Head of caudate nucleus (tissue), 42 donors: ENCODE measurements at regions of chr17 and their contacts with region 1.

Region 1: DNA sequence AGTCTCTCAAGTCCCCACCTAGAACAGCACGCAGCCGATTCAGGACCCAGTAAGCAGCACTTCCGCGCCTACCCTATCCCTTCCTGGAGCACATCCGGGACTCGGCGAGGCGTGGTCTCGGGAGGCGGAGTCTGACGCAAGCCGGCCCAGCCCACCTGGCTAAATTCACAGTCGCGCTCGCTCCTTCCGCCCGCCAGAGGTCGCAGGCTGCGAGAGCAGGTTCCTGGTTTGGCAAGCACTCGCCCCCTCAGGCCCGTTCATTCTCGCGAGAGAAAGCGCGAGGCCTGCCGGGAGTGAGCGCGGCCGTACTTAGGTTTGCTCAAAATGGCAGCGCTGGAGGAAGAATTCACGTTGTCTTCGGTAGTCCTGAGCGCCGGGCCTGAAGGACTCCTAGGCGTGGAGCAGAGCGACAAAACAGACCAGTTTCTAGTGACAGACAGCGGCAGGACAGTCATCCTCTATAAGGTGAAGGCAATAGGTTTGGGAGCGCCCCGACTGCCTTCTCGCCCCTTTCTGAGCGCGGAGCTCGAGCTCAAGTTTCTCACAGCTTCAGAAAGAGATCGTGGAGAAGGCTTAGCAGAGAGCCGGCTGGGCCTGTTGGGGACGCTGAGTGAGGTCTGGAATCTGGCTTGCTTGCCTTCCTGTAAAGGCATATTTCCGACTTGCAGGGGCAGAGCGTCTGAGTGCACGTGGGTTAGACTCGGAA is at the start of gene NOL11:
- DNase-seq: peak; percentile 99 to 100 (median 100)

Region 2: DNA sequence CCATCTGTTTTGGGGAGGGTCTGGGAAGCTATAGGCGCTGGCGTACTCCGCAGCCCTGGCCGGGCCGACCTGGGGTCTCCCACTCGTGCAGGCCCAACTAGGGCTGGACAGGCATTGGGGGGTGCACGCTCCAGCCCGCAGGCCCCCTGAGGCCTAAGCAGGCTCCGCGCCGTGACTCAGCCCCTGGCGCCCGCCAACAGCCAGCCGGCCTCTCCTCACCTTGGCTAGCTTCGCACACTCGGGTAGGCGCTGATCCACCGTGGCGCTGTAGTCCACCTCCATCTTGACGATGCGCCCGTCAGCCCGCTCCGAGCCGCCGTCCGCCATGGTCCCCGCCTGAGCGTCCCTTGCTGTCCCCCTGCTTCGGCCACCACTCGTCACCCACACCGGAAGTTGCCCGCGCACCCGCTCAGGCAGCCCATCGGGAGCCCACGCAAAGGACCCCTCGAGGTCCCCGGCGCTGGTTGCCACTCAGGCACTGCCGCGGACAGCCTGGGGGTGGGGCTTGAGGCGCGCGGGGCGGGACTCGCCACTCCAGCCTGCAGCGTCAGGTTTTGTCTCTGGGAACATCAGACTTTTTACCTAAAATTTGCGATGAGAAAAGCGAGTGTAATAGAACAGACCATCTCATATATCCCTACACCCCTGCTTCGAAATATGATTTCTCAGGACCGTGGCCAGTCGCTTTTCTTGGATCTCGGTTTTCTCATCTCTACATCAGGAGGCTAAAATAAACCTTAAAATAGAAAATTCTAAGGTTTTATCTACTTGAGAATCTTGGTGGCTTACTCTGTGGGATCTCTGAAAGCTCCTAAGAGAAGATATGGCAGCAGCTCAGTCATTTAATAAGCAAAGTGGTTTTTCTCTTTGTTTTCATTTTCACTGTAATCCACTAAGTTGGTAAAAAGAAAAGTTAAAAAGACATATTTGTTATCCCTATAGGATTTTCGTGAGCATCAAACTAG is 351.3 kb before region 1 on chr17 and contains the start of gene PSMD12:
- intact Hi-C with region 1: loop called (anchors 5 kb)
- DNase-seq: peak; percentile 85 to 98 (median 96)

Region 3: DNA sequence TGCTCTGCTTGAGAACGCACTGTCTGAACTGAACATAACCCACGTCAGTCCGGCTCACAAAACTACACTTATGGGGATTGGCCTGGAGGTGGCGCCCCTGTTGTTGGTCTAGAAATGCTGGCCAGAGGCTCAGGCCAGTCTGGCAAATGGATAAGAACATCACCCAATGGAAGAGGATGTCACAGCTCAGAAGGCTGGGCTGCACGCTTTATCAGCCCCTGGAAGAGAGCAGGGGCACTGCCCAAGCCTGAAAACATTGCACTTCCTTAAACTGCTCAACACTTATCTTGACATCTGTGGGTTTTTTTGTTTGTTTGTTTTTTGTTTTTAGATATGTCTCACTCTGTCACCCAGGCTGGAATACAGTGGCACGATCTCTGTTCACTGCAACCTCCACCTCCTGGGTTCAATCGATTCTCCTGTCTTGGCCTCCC is 82.7 kb after region 1 on chr17:
- intact Hi-C with region 1: no loop called
- DNase-seq: peak; percentile 30 to 89 (median 69)

Region 4: DNA sequence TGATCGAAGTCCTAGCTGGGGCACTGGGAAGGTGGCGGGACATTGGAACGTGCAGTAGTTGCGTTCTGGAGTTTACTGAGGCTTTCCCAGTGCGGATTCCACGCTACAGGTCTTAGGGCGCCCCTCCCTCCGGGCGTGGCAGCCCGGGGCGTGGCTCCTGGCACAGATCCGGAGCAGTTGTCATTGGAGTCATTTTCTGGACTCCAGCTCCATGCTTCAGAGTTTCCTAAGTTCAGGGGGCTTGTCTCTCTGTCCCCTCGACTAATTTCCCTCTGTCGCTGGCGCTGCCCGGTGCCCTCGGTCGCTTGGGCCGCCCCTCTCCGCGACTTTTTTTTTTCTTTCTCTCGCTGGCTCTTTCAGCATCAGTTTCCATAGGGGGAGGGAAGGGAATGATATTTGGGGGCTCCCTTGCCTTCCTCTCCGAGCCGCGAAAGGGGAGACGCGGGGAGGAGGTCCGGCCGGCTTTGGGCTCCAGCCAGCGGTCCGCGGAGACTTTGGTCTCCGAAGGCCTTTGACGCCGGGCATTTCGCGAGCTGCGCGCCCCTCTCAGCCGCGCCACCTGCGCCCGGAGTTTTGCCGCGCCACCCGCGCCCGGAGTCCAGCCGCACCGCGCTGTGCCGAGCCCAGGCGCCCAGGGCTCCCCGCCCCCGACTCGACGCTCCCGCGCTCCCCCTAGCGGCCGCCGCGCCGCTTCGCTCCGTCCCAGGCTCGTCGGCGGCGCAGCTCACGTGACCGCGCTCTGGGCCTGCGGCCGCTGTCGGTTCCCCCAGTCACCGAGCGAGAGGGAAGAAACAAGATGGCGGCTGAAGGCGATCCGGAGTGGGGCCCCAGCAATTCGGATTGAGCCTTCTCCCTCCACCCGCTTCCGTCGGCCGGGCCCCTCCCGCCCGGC is 107.2 kb after region 1 on chr17 and contains the start of gene BPTF:
- intact Hi-C with region 1: loop called (anchors 5 kb)
- DNase-seq: peak; percentile 71 to 96 (median 92)

Region 5: GRCh38 chr17:67836205-67836987 is 118.6 kb after region 1 on chr17:
- intact Hi-C with region 1: no loop called
- DNase-seq: no peak